ENCODE measurements at regions of chr20 and their contacts with region 1.

Region 1: DNA sequence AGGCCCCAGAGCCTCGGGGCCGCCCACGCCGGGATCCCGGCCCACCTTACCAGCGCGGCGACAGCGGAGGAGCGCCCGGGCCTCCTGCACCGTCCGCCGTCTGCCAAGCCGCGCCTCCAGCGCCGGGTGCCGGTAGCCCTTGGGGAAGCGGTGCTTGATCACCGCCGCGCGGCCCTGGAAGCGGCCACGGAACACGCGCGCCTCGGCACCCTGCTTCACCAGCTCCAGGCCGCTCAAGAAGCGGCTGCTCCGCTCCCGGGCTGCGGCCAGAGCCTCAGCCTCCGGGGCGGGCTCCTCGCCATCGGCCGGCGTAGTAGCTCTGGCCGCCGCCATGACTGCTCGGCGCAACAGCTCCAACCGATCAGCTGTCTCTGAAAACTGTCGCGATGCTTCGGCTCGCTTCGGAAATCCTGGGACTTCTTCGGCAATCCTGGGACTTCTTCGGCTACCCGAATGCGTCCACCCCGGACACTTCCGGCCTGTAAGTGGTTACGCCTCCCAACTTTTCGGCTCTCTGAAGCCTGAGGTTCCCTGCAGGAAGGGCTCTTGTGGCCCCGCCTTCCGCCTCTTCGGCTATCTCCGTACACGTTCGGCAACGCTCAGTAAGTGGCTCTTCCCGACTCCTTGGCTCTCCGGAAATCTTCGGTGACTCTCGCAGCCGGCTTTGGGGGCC is at the start of gene TP53RK:
- DNase-seq: peak in 1 of 2 donors; percentile 100
- H3K4me3 ChIP-seq: peak within 1 kb of the TSS; percentile 77 to 79
- H3K27ac ChIP-seq: peak within 1 kb of the TSS; percentile 93
- H3K4me1 ChIP-seq: peaks cover 43% of the 10 kb centered on the region
- H3K27me3 ChIP-seq: no peaks in the 10 kb centered on the region
- CTCF ChIP-seq: peak in 1 of 3 experiments; percentile 54
- POLR2A ChIP-seq: peak in 1 of 2 donors; percentile 77
- total RNA-seq, gene TP53RK: 27.7 TPM

Region 2: GRCh38 chr20:46562373-46563169 is 126.6 kb before region 1 on chr20:
- intact Hi-C with region 1: loop called (anchors 10 kb)
- DNase-seq: no peak
- H3K4me3 ChIP-seq: peak overlapping the region; percentile 28 to 47
- H3K27ac ChIP-seq: peak overlapping the region; percentile 40
- H3K4me1 ChIP-seq: peaks cover 6% of the 10 kb centered on the region
- H3K27me3 ChIP-seq: no peaks in the 10 kb centered on the region
- CTCF ChIP-seq: peak; percentile 70 to 78 (median 71)
- POLR2A ChIP-seq: no peak

Region 3: GRCh38 chr20:47950073-47950913 is 1261.1 kb after region 1 on chr20:
- intact Hi-C with region 1: no loop called
- DNase-seq: no peak
- H3K4me3 ChIP-seq: no peak overlapping the region
- H3K27ac ChIP-seq: no peak overlapping the region
- H3K4me1 ChIP-seq: peaks cover 16% of the 10 kb centered on the region
- H3K27me3 ChIP-seq: no peaks in the 10 kb centered on the region
- CTCF ChIP-seq: no peak
- POLR2A ChIP-seq: no peak

Measured in vagina (tissue), 2 donors.